Sigmoid colon (tissue), 7 donors: ENCODE measurements at regions of chr13 and their contacts with region 1.

Region 1: GRCh38 chr13:109145631-109146030 is 516.2 kb downstream of the MYO16 start:
- DNase-seq: no peak
- H3K4me3 ChIP-seq: no peak overlapping the region
- H3K27ac ChIP-seq: peak overlapping the region in 2 of 4 donors; percentile 55 to 69
- H3K4me1 ChIP-seq: peaks cover 0 to 28% (median 24%) of the 10 kb centered on the region in 4 donors
- H3K27me3 ChIP-seq: peaks cover 2 to 8% (median 8%) of the 10 kb centered on the region in 3 donors
- CTCF ChIP-seq: peak; percentile 49 to 77 (median 67)
- EP300 ChIP-seq: no peak
- POLR2A ChIP-seq: no peak

Region 2: GRCh38 chr13:108629181-108629752 is 516.4 kb before region 1 on chr13 and contains the start of gene MYO16:
- intact Hi-C with region 1: no loop called
- DNase-seq: no peak
- H3K4me3 ChIP-seq: no peak within 1 kb of the TSS
- H3K27ac ChIP-seq: no peak within 1 kb of the TSS
- H3K4me1 ChIP-seq: no peaks in the 10 kb centered on the region
- H3K27me3 ChIP-seq: no peaks in the 10 kb centered on the region
- CTCF ChIP-seq: no peak
- EP300 ChIP-seq: no peak
- POLR2A ChIP-seq: no peak
- total RNA-seq, gene MYO16: 0.27 to 0.33 (median 0.28) TPM in 3 of 4 donors, not detected in the other

Region 3: GRCh38 chr13:109869312-109870237 is 723.9 kb after region 1 on chr13:
- intact Hi-C with region 1: loop called (anchors 10 kb)
- DNase-seq: peak; percentile 93
- H3K4me3 ChIP-seq: peak overlapping the region; percentile 24 to 45 (median 40)
- H3K27ac ChIP-seq: peak overlapping the region; percentile 67 to 73 (median 72)
- H3K4me1 ChIP-seq: peaks cover 0 to 32% (median 21%) of the 10 kb centered on the region in 4 donors
- H3K27me3 ChIP-seq: no peaks in the 10 kb centered on the region
- CTCF ChIP-seq: peak in 2 of 4 experiments; percentile 24 to 40
- EP300 ChIP-seq: peak in 1 of 4 donors; percentile 28
- POLR2A ChIP-seq: no peak

Region 4: GRCh38 chr13:110138010-110138699 is 992.5 kb after region 1 on chr13:
- intact Hi-C with region 1: loop called (anchors 5 kb)
- DNase-seq: peak; percentile 86
- H3K4me3 ChIP-seq: peak overlapping the region; percentile 39 to 59 (median 58)
- H3K27ac ChIP-seq: peak overlapping the region; percentile 42 to 76 (median 58)
- H3K4me1 ChIP-seq: peaks cover 0 to 20% (median 16%) of the 10 kb centered on the region in 4 donors
- H3K27me3 ChIP-seq: no peaks in the 10 kb centered on the region
- CTCF ChIP-seq: no peak
- EP300 ChIP-seq: peak in 2 of 4 donors; percentile 42 to 89
- POLR2A ChIP-seq: no peak